A673 (cell line): ENCODE measurements at regions of chr1 and their contacts with region 1.

Region 1: DNA sequence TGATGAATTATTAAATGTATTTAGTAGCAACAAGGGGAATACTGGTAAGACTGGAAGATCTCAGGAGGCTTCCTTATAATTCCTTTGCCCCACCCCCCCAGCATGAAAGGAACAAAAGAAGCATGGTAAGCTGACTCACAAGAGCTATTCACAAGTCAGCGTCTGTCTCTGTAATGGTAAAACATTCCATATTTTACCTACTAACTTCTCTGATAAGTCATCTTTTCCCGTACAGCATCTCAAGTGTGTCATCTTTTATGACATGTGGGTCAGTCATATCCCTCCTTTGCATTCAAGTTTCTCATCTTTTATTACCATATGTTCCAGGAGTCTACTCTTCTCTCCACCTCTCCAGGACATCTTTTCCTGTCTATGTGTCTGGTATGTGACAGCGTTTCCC is 241.3 kb downstream of the PLA2G4A start:
- DNase-seq: peak; percentile 58
- H3K4me3 ChIP-seq: no peak overlapping the region
- H3K27ac ChIP-seq: no peak overlapping the region
- H3K4me1 ChIP-seq: peaks cover 28% of the 10 kb centered on the region
- H3K27me3 ChIP-seq: no peaks in the 10 kb centered on the region
- CTCF ChIP-seq: no peak

Region 2: DNA sequence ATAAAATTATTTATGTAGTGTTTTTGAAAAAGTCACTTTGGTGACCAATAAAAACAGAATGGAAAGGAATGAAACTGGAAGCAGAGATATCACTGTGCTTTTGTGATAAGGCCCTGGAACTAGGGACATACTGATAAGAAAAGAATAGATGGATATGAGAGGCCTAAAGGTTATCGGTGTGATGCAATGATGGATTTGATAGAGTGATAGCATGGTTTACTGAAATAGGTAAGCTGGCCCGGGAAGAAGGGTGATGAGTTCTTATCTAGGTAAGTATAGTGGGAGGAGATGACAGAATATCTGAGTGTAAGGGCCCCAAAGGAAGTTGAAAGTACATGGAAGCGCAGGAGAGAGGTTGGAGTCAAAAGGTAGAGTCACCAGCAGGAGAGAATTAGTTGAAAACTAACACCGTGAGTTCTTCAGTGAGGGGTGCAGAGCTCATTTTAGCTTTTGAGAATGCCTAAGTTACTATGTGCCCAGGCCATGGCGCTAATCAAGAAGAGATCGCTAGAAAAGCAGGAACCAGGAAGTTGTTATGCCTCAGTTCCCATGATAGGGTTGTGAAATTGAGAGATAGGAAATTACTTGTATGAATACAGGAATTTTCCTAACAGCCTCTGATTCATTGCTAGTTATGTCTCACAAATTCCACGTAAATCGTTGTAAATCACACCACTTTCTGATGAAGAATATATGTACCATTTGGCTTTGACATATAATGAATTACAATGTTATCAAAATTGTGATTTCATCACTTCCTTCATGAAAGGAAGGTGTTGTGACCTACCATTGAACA is 126.0 kb before region 1 on chr1:
- CTCF ChIA-PET with region 1: no interaction called
- POLR2A ChIA-PET with region 1: no interaction called
- intact Hi-C with region 1: no loop called
- DNase-seq: no peak
- H3K4me3 ChIP-seq: no peak overlapping the region
- H3K27ac ChIP-seq: no peak overlapping the region
- H3K4me1 ChIP-seq: no peaks in the 10 kb centered on the region
- H3K27me3 ChIP-seq: no peaks in the 10 kb centered on the region
- CTCF ChIP-seq: no peak

Region 3: GRCh38 chr1:188155261-188155660 is 1085.2 kb after region 1 on chr1:
- CTCF ChIA-PET with region 1: no interaction called
- POLR2A ChIA-PET with region 1: interaction called, 15 read pairs
- intact Hi-C with region 1: no loop called
- DNase-seq: no peak
- H3K4me3 ChIP-seq: no peak overlapping the region
- H3K27ac ChIP-seq: no peak overlapping the region
- H3K4me1 ChIP-seq: no peaks in the 10 kb centered on the region
- H3K27me3 ChIP-seq: no peaks in the 10 kb centered on the region
- CTCF ChIP-seq: no peak